ENCODE measurements at regions of chr19 and their contacts with region 1.

Region 1: GRCh38 chr19:48578891-48579290 is 26.9 kb downstream of the SULT2B1 start:
- H3K4me3 ChIP-seq: no peak overlapping the region
- H3K27ac ChIP-seq: no peak overlapping the region
- H3K4me1 ChIP-seq: no peaks in the 10 kb centered on the region; the same call in 1 of the 2 replicates
- CTCF ChIP-seq: no peak

Region 2: GRCh38 chr19:48321622-48322591 is 257.0 kb before region 1 on chr19:
- CTCF ChIA-PET with region 1: interaction called, 48 read pairs
- POLR2A ChIA-PET with region 1: no interaction called
- H3K4me3 ChIP-seq: peak overlapping the region; percentile 49
- H3K27ac ChIP-seq: peak overlapping the region; percentile 88
- H3K4me1 ChIP-seq: peaks cover 18% of the 10 kb centered on the region
- CTCF ChIP-seq: peak; percentile 74

Region 3: DNA sequence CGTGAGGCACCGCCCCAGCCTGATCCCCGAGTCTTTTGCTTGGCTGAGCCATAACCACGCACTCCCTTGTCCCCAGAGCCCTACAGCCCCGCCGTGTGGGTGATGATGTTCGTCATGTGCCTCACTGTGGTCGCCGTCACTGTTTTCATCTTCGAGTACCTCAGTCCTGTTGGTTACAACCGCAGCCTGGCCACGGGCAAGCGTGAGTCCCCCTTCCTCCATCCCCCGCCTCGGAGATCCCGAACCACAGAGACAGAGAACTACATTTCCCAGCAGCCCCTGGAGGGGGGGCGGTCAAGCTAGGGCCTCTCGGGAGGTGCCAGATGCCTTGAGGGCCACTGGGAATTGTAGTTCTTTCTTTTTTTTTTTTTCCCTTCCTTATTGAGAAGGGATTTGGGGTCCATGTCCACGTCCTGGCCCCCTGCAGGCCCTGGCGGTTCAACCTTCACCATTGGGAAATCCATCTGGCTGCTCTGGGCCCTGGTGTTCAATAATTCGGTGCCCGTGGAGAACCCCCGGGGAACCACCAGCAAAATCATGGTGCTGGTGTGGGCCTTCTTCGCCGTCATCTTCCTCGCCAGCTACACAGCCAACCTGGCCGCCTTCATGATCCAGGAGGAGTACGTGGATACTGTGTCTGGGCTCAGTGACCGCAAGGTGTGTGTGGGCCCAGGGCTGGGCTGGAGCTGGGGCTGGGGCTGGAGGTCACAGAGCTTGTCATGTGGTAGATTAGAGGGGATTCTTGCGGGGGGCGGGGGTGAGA is 159.6 kb before region 1 on chr19:
- CTCF ChIA-PET with region 1: no interaction called
- POLR2A ChIA-PET with region 1: no interaction called
- H3K4me3 ChIP-seq: no peak overlapping the region
- H3K27ac ChIP-seq: no peak overlapping the region
- H3K4me1 ChIP-seq: peaks cover 2% of the 10 kb centered on the region; the same call in 1 of the 2 replicates
- CTCF ChIP-seq: no peak

Region 4: DNA sequence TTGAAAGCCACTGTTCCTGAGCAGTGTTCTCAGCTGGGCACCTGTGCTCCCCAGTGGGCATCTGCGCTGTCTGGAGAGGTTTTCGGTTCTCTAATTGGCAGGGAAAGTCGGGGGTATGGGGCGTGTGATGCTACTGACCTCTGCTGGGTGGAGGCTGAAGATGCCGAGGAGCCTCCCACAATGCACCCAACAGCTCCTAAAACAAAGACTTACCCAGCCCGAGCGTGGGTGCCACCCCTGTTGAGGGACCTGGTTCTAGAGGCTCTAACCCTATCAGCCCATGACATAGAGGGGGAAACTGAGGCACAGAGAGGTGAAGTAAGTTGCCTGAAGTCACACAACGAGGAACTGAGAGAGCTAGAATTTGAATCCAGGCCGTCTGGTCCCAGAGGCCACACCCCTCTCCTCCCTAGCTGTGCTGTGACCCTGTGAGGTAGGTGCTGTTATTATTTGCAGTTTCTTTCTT is 29.9 kb after region 1 on chr19:
- CTCF ChIA-PET with region 1: interaction called, 26 read pairs
- POLR2A ChIA-PET with region 1: no interaction called
- H3K4me3 ChIP-seq: no peak overlapping the region
- H3K27ac ChIP-seq: no peak overlapping the region
- H3K4me1 ChIP-seq: no peaks in the 10 kb centered on the region; the same call in 1 of the 2 replicates
- CTCF ChIP-seq: peak; percentile 86

Region 5: GRCh38 chr19:48746738-48747575 is 168.1 kb after region 1 on chr19 and contains the start of gene IZUMO1:
- CTCF ChIA-PET with region 1: no interaction called
- POLR2A ChIA-PET with region 1: no interaction called
- H3K4me3 ChIP-seq: peak within 1 kb of the TSS; percentile 45
- H3K27ac ChIP-seq: peak within 1 kb of the TSS; percentile 42; the same call in 1 of the 2 replicates
- H3K4me1 ChIP-seq: no peaks in the 10 kb centered on the region
- CTCF ChIP-seq: no peak

Measured in HEK293 (cell line).